BJ (cell line): ENCODE measurements at regions of chr11 and their contacts with region 1.

Region 1: GRCh38 chr11:59668950-59669610 is at the start of gene PATL1:
- DNase-seq: peak; percentile 95
- H3K4me3 ChIP-seq: peak within 1 kb of the TSS; percentile 95
- H3K27me3 ChIP-seq: no peaks in the 10 kb centered on the region
- CTCF ChIP-seq: no peak
- polyA plus RNA-seq, gene PATL1: 33.6 and 34.3 TPM in 2 replicates

Region 2: GRCh38 chr11:59680287-59681154 is 11.4 kb after region 1 on chr11:
- CTCF ChIA-PET with region 1: interaction called, 12 read pairs
- POLR2A ChIA-PET with region 1: interaction called, 14 read pairs
- DNase-seq: no peak
- H3K4me3 ChIP-seq: no peak overlapping the region
- H3K27me3 ChIP-seq: no peaks in the 10 kb centered on the region
- CTCF ChIP-seq: peak; percentile 92